ENCODE measurements at regions of chr15 and their contacts with region 1.

Region 1: DNA sequence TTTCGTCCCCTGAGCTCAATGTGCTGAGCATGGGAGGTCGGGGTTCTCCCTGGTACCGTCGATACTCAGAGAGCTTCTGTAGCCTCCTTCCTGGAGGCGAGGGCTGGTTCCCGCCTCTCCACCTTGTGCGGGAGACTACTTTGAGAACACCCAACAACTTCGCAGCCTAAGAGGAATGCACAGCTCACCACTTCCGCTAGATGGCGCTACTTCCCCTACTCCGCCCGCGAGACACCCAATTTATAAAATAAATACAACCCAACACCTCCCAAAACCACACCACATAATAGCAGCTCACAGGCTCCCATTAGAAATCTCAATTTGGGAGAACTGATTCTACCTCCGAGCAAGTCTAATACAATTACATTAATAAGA is 1.2 kb downstream of the RGMA start:
- DNase-seq: peak; percentile 15
- ATAC-seq: peak; percentile 87
- H3K4me3 ChIP-seq: no peak overlapping the region
- H3K27ac ChIP-seq: no peak overlapping the region
- H3K4me1 ChIP-seq: no peaks in the 10 kb centered on the region; the same call in 1 of the 2 replicates
- H3K27me3 ChIP-seq: peaks cover 8 to 11% of the 10 kb centered on the region in 2 experiments
- CTCF ChIP-seq: peak; percentile 74 to 83 (median 83)
- EP300 ChIP-seq: no peak
- POLR2A ChIP-seq: no peak
- RAD21 ChIP-seq: peak; percentile 68

Region 2: GRCh38 chr15:92808978-92809879 is 278.6 kb before region 1 on chr15:
- CTCF ChIA-PET with region 1: no interaction called
- POLR2A ChIA-PET with region 1: no interaction called
- RAD21 ChIA-PET with region 1: no interaction called
- SMC1A ChIA-PET with region 1: no interaction called
- in situ Hi-C with region 1: no loop called
- intact Hi-C with region 1: no loop called
- DNase-seq: peak; percentile 94
- ATAC-seq: peak; percentile 87
- H3K4me3 ChIP-seq: peak overlapping the region; percentile 79
- H3K27ac ChIP-seq: peak overlapping the region; percentile 100
- H3K4me1 ChIP-seq: peaks cover 2% of the 10 kb centered on the region
- H3K27me3 ChIP-seq: no peaks in the 10 kb centered on the region
- CTCF ChIP-seq: peak; percentile 75 to 99 (median 90); a peak in 5 of 6 replicates
- EP300 ChIP-seq: peak in 1 of 2 experiments; percentile 52; a peak in 2 of 4 replicates
- POLR2A ChIP-seq: peak; percentile 92
- RAD21 ChIP-seq: peak; percentile 61

Region 3: DNA sequence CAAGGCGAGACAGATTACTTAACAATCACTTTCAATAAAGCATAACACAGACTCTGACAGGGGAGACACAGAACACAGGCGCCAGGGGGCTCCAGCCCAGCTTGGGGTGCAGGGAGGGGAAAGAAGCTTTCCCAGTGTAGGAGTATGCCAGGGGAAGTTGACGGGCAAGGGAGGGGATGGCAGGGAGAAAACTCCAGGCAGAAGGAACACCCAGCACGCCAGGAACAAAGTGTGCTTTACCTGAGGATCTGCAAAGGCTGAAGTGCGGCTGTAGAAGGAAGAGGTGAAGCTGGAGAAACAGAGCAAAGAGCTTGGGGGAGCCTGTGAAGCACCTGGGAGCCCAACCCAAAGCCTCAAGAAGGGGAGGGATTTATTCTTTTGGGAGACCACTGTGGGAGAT is 10.9 kb before region 1 on chr15:
- CTCF ChIA-PET with region 1: interaction called, 19 read pairs
- POLR2A ChIA-PET with region 1: no interaction called
- RAD21 ChIA-PET with region 1: no interaction called
- SMC1A ChIA-PET with region 1: interaction called, 3 read pairs
- in situ Hi-C with region 1: no loop called
- intact Hi-C with region 1: no loop called
- DNase-seq: no peak
- ATAC-seq: no peak
- H3K4me3 ChIP-seq: no peak overlapping the region
- H3K27ac ChIP-seq: no peak overlapping the region
- H3K4me1 ChIP-seq: no peaks in the 10 kb centered on the region
- H3K27me3 ChIP-seq: peaks cover 8 to 18% of the 10 kb centered on the region in 2 experiments
- CTCF ChIP-seq: no peak
- EP300 ChIP-seq: no peak
- POLR2A ChIP-seq: no peak
- RAD21 ChIP-seq: no peak

Region 4: DNA sequence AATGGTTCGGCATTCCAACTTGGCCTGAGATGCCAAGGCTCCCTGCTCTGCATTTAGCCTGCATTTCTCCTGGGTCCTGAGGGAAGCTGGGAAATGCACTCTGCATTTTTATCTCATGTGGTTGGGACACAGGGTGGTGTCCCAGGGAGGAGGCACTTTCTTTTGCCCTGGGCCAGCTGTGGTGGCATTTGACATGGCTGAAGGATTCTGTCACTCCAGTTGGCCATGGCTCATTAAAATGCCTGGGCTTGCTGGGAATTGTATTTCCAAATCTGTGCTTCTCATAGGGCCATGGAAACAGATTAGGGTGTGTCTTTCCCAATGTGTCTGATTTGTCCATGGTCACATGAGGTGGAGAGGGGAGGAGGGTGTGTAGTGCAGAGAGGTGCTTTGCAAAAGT is 129.5 kb after region 1 on chr15:
- CTCF ChIA-PET with region 1: no interaction called
- POLR2A ChIA-PET with region 1: no interaction called
- RAD21 ChIA-PET with region 1: no interaction called
- SMC1A ChIA-PET with region 1: no interaction called
- in situ Hi-C with region 1: no loop called
- intact Hi-C with region 1: loop called (anchors 10 kb)
- DNase-seq: no peak
- ATAC-seq: no peak
- H3K4me3 ChIP-seq: no peak overlapping the region
- H3K27ac ChIP-seq: no peak overlapping the region
- H3K4me1 ChIP-seq: no peaks in the 10 kb centered on the region
- H3K27me3 ChIP-seq: no peaks in the 10 kb centered on the region
- CTCF ChIP-seq: no peak
- EP300 ChIP-seq: no peak
- POLR2A ChIP-seq: no peak
- RAD21 ChIP-seq: no peak

Measured in GM12878 (cell line).